A673 (cell line): ENCODE measurements at regions of chr2 and their contacts with region 1.

Region 1: DNA sequence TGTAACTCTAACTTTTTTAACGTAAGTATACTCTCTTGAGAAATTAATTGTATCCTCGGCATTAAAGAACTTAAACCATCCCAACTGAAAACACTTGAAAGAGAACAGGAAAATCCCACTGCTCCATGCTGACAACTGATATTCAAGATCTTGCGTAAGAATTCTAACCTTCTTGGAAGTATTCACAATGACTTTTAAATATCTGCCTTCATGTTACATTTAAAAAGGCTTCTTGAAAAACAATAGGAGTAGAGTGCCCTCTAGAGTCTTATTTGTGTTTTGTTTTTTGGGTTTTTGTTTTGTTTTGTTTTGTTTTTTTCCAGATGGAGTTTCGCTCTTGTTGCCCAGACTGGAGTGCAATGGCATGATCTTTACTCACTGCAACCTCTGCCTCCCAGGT is 65.4 kb upstream of the DNAJC10 start:
- DNase-seq: peak; percentile 85
- H3K4me3 ChIP-seq: no peak overlapping the region
- H3K27ac ChIP-seq: no peak overlapping the region
- H3K4me1 ChIP-seq: peaks cover 17% of the 10 kb centered on the region
- H3K27me3 ChIP-seq: no peaks in the 10 kb centered on the region
- CTCF ChIP-seq: peak; percentile 60

Region 2: GRCh38 chr2:181573140-181573736 is 1077.5 kb before region 1 on chr2:
- CTCF ChIA-PET with region 1: no interaction called
- POLR2A ChIA-PET with region 1: no interaction called
- intact Hi-C with region 1: loop called (anchors 5 kb)
- DNase-seq: peak; percentile 53
- H3K4me3 ChIP-seq: no peak overlapping the region
- H3K27ac ChIP-seq: no peak overlapping the region
- H3K4me1 ChIP-seq: peaks cover 13% of the 10 kb centered on the region
- H3K27me3 ChIP-seq: no peaks in the 10 kb centered on the region
- CTCF ChIP-seq: peak; percentile 67

Region 3: DNA sequence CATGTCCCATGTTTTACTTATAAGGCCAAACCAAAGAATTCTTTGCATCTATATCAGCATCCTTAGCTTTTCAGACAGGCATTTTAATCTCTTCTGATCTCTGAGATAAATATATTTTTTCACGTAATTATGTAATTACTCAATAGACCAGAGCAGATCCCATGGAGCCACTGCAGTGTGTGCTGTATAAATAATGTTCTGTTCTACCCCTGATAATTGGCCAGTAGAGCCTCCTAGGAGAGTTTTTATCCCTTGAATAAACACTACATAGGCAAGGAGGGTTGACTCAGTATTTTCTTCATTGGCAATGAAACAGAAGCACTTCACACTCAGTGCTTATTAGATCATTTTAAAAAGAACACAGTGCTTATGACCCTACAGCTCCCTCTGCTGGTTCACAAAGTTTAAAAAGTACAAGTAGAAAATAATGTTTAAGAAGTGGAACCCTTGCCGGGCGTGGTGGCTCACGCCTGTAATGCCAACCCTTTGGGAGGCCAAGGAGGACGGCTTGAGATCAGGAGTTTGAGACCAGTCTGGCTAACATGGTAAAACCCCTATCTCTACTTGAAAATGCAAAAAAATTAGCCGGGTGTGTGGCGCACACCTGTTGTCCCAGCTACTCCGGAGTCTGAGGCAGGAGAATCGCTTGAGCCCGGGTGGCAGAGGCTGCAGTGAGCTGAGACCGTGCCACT is 573.1 kb before region 1 on chr2:
- CTCF ChIA-PET with region 1: interaction called, 4 read pairs
- POLR2A ChIA-PET with region 1: no interaction called
- intact Hi-C with region 1: loop called (anchors 5 kb)
- DNase-seq: peak; percentile 93
- H3K4me3 ChIP-seq: no peak overlapping the region
- H3K27ac ChIP-seq: no peak overlapping the region
- H3K4me1 ChIP-seq: peaks cover 19% of the 10 kb centered on the region
- H3K27me3 ChIP-seq: no peaks in the 10 kb centered on the region
- CTCF ChIP-seq: peak; percentile 72

Region 4: DNA sequence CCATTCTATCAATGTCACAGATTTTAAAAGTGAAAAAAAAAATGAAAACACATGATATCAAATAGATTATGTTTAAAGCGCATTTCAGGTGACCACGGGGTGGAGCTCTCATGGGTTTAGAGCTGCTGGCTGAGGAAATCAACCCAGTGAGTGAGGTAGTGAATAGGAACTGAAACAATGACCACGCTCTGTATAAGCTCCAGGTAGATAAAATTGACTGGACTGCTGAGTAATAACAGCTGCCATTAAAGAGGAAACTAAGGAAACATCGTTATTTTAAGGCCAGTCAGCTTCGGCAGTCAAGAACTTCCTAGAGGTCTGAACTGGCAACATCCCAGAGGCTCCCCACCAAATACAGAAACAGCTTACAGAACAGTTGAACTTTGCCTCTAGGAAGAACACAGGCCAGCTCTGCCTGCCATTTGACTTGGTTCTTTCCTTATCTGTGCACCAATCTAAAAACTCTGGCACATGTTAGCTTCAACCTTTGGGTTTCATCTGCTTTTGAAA is 409.8 kb before region 1 on chr2:
- CTCF ChIA-PET with region 1: interaction called, 4 read pairs
- POLR2A ChIA-PET with region 1: no interaction called
- intact Hi-C with region 1: loop called (anchors 2 kb)
- DNase-seq: peak; percentile 37
- H3K4me3 ChIP-seq: no peak overlapping the region
- H3K27ac ChIP-seq: no peak overlapping the region
- H3K4me1 ChIP-seq: peaks cover 4% of the 10 kb centered on the region
- H3K27me3 ChIP-seq: no peaks in the 10 kb centered on the region
- CTCF ChIP-seq: peak; percentile 59

Region 5: GRCh38 chr2:182593394-182593975 is 57.2 kb before region 1 on chr2:
- CTCF ChIA-PET with region 1: interaction called, 3 read pairs
- POLR2A ChIA-PET with region 1: no interaction called
- intact Hi-C with region 1: loop called (anchors 5 kb)
- DNase-seq: peak; percentile 96
- H3K4me3 ChIP-seq: no peak overlapping the region
- H3K27ac ChIP-seq: no peak overlapping the region
- H3K4me1 ChIP-seq: peaks cover 49% of the 10 kb centered on the region
- H3K27me3 ChIP-seq: no peaks in the 10 kb centered on the region
- CTCF ChIP-seq: no peak